Psoas muscle (tissue), 8 donors: ENCODE measurements at regions of chr2 and their contacts with region 1.

Region 1: GRCh38 chr2:241232736-241233554 is 44.5 kb downstream of the ANO7 start:
- DNase-seq: peak in 1 of 2 donors; percentile 30
- ATAC-seq: no peak
- H3K4me3 ChIP-seq: no peak overlapping the region
- H3K27ac ChIP-seq: no peak overlapping the region
- H3K4me1 ChIP-seq: no peaks in the 10 kb centered on the region
- H3K27me3 ChIP-seq: no peaks in the 10 kb centered on the region
- CTCF ChIP-seq: no peak

Region 2: GRCh38 chr2:241081643-241082340 is 151.2 kb before region 1 on chr2:
- intact Hi-C with region 1: loop called in 1 of 2 experiments (anchors 5 kb)
- DNase-seq: peak in 1 of 2 donors; percentile 54
- ATAC-seq: peak in 3 of 4 donors; percentile 8 to 28 (median 19)
- H3K4me3 ChIP-seq: no peak overlapping the region
- H3K27ac ChIP-seq: no peak overlapping the region
- H3K4me1 ChIP-seq: no peaks in the 10 kb centered on the region
- H3K27me3 ChIP-seq: no peaks in the 10 kb centered on the region
- CTCF ChIP-seq: no peak

Region 3: DNA sequence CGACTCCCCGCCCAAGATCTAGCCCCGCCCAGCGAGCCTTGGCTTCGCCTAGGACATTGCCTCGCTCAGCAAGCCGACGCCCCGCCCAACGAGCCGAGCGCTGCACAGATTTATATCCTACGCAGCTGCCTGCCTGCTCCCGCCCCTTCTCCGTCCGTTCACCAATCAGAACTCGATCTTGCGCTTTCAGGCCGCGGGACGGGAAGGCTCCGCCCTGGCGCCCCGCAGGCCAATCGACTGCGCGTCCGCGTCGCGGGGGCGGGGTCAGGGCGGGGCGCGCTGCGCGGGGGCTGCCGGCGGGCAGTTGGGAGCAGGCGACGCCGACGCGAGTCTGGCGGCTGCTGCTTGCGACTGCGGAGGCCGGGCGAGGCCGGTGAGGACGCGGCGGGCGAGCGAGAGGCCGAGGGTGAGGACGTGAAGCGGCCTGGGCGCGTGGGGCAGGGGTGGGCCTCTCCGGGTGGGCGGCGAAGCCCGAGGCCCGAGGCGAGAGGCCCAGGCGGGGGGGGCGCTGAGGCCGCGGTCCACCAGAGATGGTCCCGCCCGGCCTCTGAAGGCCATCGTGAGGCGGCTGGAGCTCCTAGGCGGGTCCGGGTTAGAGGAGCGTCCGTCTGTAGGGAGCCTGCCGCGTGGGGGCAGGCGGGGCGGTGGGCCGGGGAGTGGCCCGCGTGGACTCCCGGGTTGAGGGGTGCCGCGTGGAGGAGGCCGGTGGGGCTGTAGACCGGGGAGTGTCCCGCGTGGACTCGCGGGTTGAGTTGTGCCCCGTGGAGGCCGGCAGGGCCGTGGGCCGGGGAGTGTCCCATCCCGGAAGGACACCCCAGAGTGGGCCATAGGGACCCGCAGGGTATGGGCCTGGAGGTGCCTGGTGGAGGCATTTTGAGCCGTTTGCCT is 123.3 kb after region 1 on chr2 and contains the start of gene FARP2:
- intact Hi-C with region 1: no loop called
- DNase-seq: peak; percentile 99 to 100
- ATAC-seq: peak; percentile 90 to 93 (median 92)
- H3K4me3 ChIP-seq: peak within 1 kb of the TSS; percentile 75
- H3K27ac ChIP-seq: peak within 1 kb of the TSS; percentile 90
- H3K4me1 ChIP-seq: peaks cover 15% of the 10 kb centered on the region
- H3K27me3 ChIP-seq: no peaks in the 10 kb centered on the region
- CTCF ChIP-seq: no peak
- total RNA-seq, gene FARP2: 17.4 to 18.4 (median 17.7) TPM